Calu3 (cell line): ENCODE measurements at regions of chr17 and their contacts with region 1.

Region 1: DNA sequence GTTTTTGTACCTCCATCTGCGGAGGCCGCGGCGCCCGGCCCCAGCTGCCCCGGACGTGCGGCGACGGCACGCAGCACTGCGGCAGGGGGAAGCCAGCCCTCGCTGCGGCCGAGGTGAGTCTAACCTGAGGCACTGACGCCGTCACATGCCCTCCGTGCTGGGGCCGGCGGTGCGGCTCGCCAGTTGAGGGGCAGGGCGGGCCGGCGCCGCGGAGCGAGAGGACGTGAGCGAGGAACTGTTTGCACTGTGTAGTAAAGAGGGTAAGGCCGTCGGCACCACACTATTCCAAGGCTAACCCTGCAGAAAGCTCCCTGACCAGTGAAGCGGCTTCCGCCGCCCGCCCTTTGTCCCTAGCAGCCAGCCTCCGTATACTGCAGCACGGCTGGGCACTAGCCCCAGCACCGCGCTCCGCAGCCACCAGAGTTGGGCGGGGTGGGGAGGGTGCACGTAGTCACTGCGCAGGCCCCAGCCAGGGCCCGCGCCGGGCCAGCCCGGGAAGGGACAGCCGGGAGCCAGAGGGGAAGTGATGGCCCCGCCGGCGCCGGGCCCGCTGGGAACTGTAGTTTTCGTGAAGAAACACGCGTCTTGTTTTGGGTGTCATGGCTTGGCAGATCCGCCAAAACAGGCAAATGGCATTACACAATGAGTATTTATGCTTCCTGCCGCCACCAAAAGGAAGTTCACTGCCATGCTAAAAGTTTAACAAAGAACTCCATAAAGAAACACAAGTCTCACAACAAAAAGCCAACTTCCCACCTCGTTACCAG is 580 bp upstream of the KANSL1 start:
- DNase-seq: peak; percentile 99
- H3K4me3 Mint-ChIP-seq: peak overlapping the region; percentile 95
- H3K27ac Mint-ChIP-seq: peak overlapping the region; percentile 99
- H3K4me1 Mint-ChIP-seq: peaks cover 50% of the 10 kb centered on the region
- H3K27me3 Mint-ChIP-seq: no peaks in the 10 kb centered on the region
- CTCF ChIP-seq: peak; percentile 54

Region 2: DNA sequence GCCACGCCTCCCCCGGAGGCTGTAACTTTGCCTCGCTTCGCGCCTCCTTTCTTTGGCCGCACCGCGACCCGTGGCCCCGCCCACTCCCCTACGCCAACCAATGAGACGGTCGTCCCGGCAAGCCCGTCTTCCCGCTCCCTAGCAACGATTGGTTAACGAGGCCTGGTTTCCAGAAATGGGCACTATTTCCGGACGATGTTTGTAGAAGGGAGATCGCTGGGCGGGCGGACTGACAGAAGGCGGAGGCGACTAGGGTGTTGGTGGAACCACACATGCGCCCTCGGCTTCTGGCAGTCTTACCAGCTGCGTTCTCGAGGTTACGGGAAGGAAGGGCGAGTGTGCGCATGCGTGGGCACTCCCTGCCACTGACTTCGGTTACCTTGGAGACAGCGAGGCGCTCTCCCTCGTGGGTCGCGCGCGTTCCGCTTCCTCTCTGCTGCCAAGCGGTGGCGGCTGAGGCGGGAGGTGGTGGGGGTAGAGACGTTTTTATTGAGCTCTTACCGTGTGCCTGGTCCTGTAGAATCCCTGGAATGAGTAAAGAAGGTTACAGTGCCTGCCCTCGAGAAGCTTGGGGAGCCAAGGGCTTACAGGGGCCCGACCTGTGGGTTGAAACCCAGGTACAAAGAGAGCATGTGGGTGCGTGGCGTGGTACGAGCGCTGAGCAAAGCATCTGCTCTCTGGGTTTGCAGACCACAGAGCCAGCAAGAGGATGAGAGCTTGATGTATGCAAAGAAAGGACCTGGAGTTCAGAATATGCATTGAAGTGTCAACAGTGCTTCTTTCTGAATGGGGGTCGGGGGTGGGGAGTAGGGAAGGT is 876.5 kb before region 1 on chr17:
- CTCF ChIA-PET with region 1: no interaction called
- intact Hi-C with region 1: no loop called
- DNase-seq: peak; percentile 100
- H3K4me3 Mint-ChIP-seq: peak overlapping the region; percentile 88
- H3K27ac Mint-ChIP-seq: peak overlapping the region; percentile 95
- H3K4me1 Mint-ChIP-seq: peaks cover 85% of the 10 kb centered on the region
- H3K27me3 Mint-ChIP-seq: no peaks in the 10 kb centered on the region
- CTCF ChIP-seq: peak; percentile 11

Region 3: DNA sequence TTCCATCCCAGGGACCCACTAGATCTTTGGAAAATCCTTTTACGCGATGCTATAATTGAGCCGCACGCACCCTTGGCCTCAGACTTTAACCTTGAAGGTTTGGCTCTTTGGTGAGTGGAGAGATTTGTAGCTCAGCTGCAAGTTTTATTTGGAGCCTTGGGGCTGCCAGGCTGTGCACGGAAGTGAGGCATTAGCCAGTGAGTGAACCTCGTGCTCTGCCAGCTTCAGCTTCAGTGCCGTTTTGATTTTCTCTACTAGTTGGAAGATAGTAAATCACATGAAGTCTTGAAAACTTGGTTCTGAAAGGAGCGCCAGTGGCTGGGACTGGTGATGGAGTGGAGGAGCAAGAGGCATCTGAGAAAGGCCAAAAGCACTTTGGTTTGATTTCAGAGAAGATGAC is 392.4 kb before region 1 on chr17:
- CTCF ChIA-PET with region 1: no interaction called
- intact Hi-C with region 1: no loop called
- DNase-seq: no peak
- H3K4me3 Mint-ChIP-seq: no peak overlapping the region
- H3K27ac Mint-ChIP-seq: no peak overlapping the region
- H3K4me1 Mint-ChIP-seq: no peaks in the 10 kb centered on the region
- H3K27me3 Mint-ChIP-seq: peaks cover 100% of the 10 kb centered on the region
- CTCF ChIP-seq: no peak

Region 4: GRCh38 chr17:45902892-45903346 is 290.9 kb before region 1 on chr17:
- CTCF ChIA-PET with region 1: no interaction called
- intact Hi-C with region 1: no loop called
- DNase-seq: peak; percentile 54
- H3K4me3 Mint-ChIP-seq: no peak overlapping the region
- H3K27ac Mint-ChIP-seq: no peak overlapping the region
- H3K4me1 Mint-ChIP-seq: no peaks in the 10 kb centered on the region
- H3K27me3 Mint-ChIP-seq: peaks cover 87% of the 10 kb centered on the region
- CTCF ChIP-seq: no peak

Region 5: GRCh38 chr17:45973099-45973780 is 220.6 kb before region 1 on chr17:
- CTCF ChIA-PET with region 1: no interaction called
- intact Hi-C with region 1: no loop called
- DNase-seq: no peak
- H3K4me3 Mint-ChIP-seq: no peak overlapping the region
- H3K27ac Mint-ChIP-seq: no peak overlapping the region
- H3K4me1 Mint-ChIP-seq: no peaks in the 10 kb centered on the region
- H3K27me3 Mint-ChIP-seq: peaks cover 73% of the 10 kb centered on the region
- CTCF ChIP-seq: no peak

Region 6: GRCh38 chr17:46044286-46044928 is 149.4 kb before region 1 on chr17:
- CTCF ChIA-PET with region 1: interaction called, 37 read pairs
- intact Hi-C with region 1: no loop called
- DNase-seq: peak; percentile 83
- H3K4me3 Mint-ChIP-seq: no peak overlapping the region
- H3K27ac Mint-ChIP-seq: peak overlapping the region; percentile 11
- H3K4me1 Mint-ChIP-seq: peaks cover 17% of the 10 kb centered on the region
- H3K27me3 Mint-ChIP-seq: no peaks in the 10 kb centered on the region
- CTCF ChIP-seq: peak; percentile 93

Region 7: GRCh38 chr17:46159686-46160085 is 34.1 kb before region 1 on chr17:
- CTCF ChIA-PET with region 1: interaction called, 16 read pairs
- intact Hi-C with region 1: no loop called
- DNase-seq: no peak
- H3K4me3 Mint-ChIP-seq: no peak overlapping the region
- H3K27ac Mint-ChIP-seq: peak overlapping the region; percentile 25
- H3K4me1 Mint-ChIP-seq: peaks cover 62% of the 10 kb centered on the region
- H3K27me3 Mint-ChIP-seq: no peaks in the 10 kb centered on the region
- CTCF ChIP-seq: no peak

Region 8: DNA sequence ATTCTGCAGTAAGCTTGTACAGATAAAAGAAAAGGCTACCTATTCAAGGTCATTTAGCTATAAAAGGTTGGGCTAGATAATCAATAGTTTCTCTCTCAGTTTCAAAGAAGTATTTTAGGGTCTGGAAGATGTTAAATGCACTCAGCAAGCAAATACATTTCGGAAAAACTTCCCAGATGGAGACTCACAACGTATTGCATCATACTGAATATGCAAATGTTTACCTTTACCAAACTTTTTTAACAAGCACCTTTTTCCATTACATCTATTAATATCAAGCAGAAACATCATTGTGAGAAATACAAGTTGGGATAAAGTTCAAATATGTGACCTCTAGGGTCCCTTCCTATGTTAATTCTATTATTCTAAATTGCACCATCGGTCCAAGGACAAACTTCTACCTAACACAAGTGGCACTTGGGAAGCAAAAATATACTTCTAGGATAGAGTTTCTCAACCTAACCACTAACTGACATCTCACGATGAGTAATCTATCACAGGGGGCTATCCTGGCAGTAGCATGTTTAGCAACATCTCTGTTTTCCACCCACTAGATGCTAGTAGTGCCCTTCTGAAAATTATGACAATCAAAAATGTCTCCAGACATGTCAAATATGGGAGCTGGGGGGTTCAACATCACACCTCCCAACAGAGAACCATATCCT is 15.1 kb before region 1 on chr17:
- CTCF ChIA-PET with region 1: interaction called, 12 read pairs
- intact Hi-C with region 1: no loop called
- DNase-seq: no peak
- H3K4me3 Mint-ChIP-seq: no peak overlapping the region
- H3K27ac Mint-ChIP-seq: peak overlapping the region; percentile 4
- H3K4me1 Mint-ChIP-seq: peaks cover 69% of the 10 kb centered on the region
- H3K27me3 Mint-ChIP-seq: no peaks in the 10 kb centered on the region
- CTCF ChIP-seq: no peak

Region 9: DNA sequence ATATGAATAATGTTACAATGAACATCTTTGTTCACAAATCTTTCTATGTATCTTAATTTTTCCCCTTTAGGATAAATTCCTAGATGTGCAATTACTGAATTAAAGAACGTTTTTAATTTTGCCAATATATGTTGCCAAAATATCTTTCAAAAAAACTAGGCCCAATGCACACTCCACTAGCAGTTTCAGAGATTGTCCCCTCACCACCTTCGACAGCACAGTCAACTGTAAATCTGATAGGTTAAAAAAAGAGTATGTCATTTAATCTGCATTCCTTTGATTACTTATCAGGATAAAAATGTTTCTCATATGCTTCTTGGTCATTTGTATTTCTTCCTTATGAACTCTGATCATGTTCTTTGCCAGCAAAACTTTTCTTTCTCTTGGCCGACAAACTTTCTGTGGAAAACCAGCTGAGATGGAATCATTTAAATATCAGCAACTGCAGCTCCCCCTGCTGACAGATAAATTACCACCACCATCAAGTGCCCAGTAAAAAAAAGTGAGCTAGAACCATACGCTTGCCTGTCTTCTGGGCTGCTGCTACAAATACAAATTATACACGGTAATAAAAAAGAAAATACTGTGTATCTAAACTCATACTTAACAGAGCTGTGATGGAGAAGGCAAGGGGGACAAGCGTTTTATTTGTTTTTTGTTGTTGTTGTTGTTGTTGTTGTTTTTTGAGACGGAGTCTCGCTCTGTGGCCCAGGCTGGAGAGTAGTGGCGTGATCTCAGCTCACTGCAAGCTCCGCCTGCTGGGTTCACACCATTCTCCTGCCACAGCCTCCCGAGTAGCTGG is 19.0 kb after region 1 on chr17:
- CTCF ChIA-PET with region 1: interaction called, 105 read pairs
- intact Hi-C with region 1: loop called (anchors 1 kb)
- DNase-seq: peak; percentile 83
- H3K4me3 Mint-ChIP-seq: no peak overlapping the region
- H3K27ac Mint-ChIP-seq: peak overlapping the region; percentile 19
- H3K4me1 Mint-ChIP-seq: peaks cover 22% of the 10 kb centered on the region
- H3K27me3 Mint-ChIP-seq: no peaks in the 10 kb centered on the region
- CTCF ChIP-seq: peak; percentile 96